Heart left ventricle (tissue), 16 donors: ENCODE measurements at regions of chr2 and their contacts with region 1.

Region 1: GRCh38 chr2:172102391-172103278 is at the start of gene DLX2:
- DNase-seq: peak; percentile 68 to 88 (median 80)
- ATAC-seq: peak; percentile 32 to 78 (median 69)
- H3K4me3 ChIP-seq: peak within 1 kb of the TSS; percentile 15 to 66 (median 51)
- H3K27ac ChIP-seq: no peak within 1 kb of the TSS
- H3K4me1 ChIP-seq: peaks cover 2 to 77% (median 51%) of the 10 kb centered on the region in 12 donors
- H3K27me3 ChIP-seq: peaks cover 83 to 100% (median 100%) of the 10 kb centered on the region in 9 donors
- CTCF ChIP-seq: no peak
- POLR2A ChIP-seq: no peak
- total RNA-seq, gene DLX2: not detected

Region 2: DNA sequence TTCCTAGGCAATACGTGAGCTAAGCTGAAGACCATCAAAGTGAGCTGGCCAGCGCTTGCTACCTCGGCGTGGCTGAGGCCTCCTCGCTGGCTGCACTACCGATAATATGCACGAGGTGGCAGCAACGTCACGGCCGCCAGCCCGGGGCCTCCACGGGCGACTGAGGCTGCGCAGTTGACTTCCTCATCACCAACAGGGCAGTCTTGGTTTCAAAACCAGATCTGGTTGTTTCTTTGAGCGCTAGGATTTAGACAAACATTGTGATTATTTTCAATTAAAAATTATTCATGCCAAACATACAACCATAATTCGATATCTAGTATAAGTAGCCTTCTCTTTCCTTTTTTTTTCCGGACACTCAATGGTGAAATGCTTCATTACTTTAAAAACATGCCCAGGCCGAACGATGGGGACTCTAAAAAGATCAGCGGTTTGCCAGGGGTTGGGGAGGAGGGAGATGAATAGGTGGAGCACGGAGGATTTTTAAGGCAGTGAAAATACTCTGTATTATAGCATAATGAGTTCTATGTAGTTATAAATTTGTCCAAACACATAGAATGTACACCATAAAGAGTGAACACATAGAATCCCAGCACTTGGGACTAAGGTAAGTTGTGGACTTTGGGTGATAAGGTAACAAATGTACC is 528.4 kb before region 1 on chr2:
- intact Hi-C with region 1: loop called in 3 of 10 experiments (anchors 10 kb)
- DNase-seq: peak; percentile 73 to 91 (median 80)
- ATAC-seq: peak; percentile 66 to 97 (median 96)
- H3K4me3 ChIP-seq: peak overlapping the region in 2 of 12 donors; percentile 1 to 5
- H3K27ac ChIP-seq: no peak overlapping the region
- H3K4me1 ChIP-seq: no peaks in the 10 kb centered on the region
- H3K27me3 ChIP-seq: peaks cover 0 to 5% (median 0%) of the 10 kb centered on the region in 9 donors
- CTCF ChIP-seq: peak; percentile 95 to 99 (median 98)
- POLR2A ChIP-seq: no peak

Region 3: GRCh38 chr2:171598713-171599319 is 503.8 kb before region 1 on chr2:
- intact Hi-C with region 1: loop called in 3 of 10 experiments (anchors 5 to 10 kb)
- DNase-seq: peak in 1 of 5 donors; percentile 22
- ATAC-seq: peak; percentile 54 to 84 (median 66)
- H3K4me3 ChIP-seq: no peak overlapping the region
- H3K27ac ChIP-seq: no peak overlapping the region
- H3K4me1 ChIP-seq: peaks cover 0 to 3% (median 0%) of the 10 kb centered on the region in 12 donors
- H3K27me3 ChIP-seq: peaks cover 0 to 24% (median 0%) of the 10 kb centered on the region in 9 donors
- CTCF ChIP-seq: peak; percentile 60 to 83 (median 72)
- POLR2A ChIP-seq: no peak

Region 4: DNA sequence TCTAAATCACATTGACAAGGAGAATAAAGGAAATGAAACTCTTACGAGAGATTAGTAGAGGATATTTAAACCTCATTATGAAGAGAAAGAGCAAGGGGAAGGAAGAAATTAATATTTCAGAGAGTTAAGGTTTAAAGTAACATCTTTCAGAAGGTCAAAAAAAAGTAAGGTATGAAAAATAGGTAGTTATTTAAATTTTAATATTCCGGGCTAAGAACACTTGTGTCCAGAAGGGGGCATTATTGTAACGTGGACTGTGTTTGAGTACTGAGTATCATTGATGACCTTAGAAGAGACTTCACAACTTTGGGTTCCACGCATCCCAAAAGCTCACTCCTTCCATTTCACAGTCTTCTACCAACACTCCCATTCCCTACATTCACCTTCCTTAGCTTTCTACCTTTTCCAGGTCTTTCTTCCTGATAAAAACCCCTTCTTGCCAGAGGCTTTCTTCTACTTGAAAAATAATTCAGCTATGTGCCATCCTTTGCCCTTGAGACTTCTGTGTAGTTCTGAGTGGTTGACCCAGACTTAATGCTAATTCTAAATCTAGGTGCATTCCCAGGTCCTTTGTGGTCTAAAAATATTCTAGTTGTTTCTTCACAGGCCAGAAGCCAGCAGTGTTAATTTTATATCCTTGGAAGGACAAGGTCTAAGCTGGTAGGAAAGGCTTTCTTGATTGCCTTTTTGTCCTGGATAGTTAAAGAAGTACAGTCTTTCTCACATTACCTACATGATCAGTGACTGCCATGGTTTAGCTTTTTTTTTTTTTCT is 398.9 kb before region 1 on chr2:
- intact Hi-C with region 1: loop called in 9 of 10 experiments (anchors 1 to 10 kb)
- DNase-seq: no peak
- ATAC-seq: peak; percentile 20 to 75 (median 52)
- H3K4me3 ChIP-seq: no peak overlapping the region
- H3K27ac ChIP-seq: peak overlapping the region in 10 of 12 donors; percentile 9 to 69 (median 43)
- H3K4me1 ChIP-seq: peaks cover 0 to 41% (median 16%) of the 10 kb centered on the region in 12 donors
- H3K27me3 ChIP-seq: no peaks in the 10 kb centered on the region
- CTCF ChIP-seq: peak; percentile 17 to 58 (median 38)
- POLR2A ChIP-seq: no peak

Region 5: GRCh38 chr2:171811245-171811628 is 291.4 kb before region 1 on chr2:
- intact Hi-C with region 1: loop called (anchors 2 to 10 kb)
- DNase-seq: no peak
- ATAC-seq: peak in 2 of 4 donors; percentile 22 to 28
- H3K4me3 ChIP-seq: no peak overlapping the region
- H3K27ac ChIP-seq: no peak overlapping the region
- H3K4me1 ChIP-seq: peaks cover 0 to 14% (median 0%) of the 10 kb centered on the region in 12 donors
- H3K27me3 ChIP-seq: no peaks in the 10 kb centered on the region
- CTCF ChIP-seq: peak in 9 of 12 donors; percentile 16 to 54 (median 41)
- POLR2A ChIP-seq: no peak

Region 6: GRCh38 chr2:171922230-171923022 is 180.2 kb before region 1 on chr2 and contains the start of gene HAT1:
- intact Hi-C with region 1: loop called in 1 of 10 experiments (anchors 10 kb)
- DNase-seq: peak; percentile 97 to 98 (median 98)
- ATAC-seq: peak; percentile 100
- H3K4me3 ChIP-seq: peak within 1 kb of the TSS; percentile 62 to 99 (median 84)
- H3K27ac ChIP-seq: peak within 1 kb of the TSS; percentile 72 to 97 (median 90)
- H3K4me1 ChIP-seq: peaks cover 6 to 33% (median 19%) of the 10 kb centered on the region in 12 donors
- H3K27me3 ChIP-seq: no peaks in the 10 kb centered on the region
- CTCF ChIP-seq: no peak
- POLR2A ChIP-seq: peak in 1 of 2 donors; percentile 76
- total RNA-seq, gene HAT1: 22.2 to 43.1 (median 34.1) TPM

Region 7: DNA sequence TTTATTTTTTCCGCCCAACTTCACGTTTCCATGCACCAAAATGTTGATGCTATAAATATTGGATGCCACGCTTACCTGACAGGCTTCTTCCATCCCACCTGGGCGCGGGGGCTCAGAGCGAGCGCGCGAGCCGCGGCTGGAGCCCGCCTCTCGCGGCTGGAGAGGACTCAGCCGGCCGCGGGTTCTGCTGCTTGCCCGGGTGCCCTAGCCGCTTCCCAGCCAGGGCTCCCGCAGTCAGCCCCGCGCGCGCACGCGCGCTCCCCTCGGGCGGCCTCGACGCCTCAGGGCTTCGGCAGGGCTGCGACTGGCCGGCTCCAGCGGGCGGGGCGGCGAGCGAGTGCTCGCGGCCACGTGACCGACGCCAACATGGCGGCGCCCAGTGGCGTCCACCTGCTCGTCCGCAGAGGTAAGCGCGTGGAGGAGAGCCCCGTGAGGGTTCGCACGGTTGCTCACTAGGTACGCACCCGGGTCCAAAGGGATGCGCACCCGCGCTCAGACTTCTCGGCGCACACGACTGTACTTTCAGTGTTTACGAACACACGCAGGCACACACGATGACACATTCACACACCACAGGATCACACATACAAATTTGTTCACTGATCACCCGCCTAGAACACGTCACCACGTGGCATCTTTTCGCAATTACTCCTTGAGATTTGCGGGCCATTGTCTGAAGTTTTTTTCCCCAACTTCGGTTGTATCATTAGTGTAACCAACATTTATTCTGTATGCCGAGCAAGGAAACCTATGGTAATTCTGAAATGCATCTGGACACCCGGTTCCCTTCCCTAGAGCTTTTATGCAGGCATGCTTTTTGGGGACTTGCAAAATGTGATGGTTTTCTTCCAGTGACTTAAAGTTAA is 102.8 kb before region 1 on chr2 and contains the start of gene METAP1D:
- intact Hi-C with region 1: loop called in 1 of 10 experiments (anchors 5 kb)
- DNase-seq: peak; percentile 86 to 95 (median 93)
- ATAC-seq: peak; percentile 94 to 100 (median 100)
- H3K4me3 ChIP-seq: peak within 1 kb of the TSS; percentile 37 to 99 (median 80)
- H3K27ac ChIP-seq: peak within 1 kb of the TSS in 3 of 12 donors; percentile 4 to 44 (median 38)
- H3K4me1 ChIP-seq: peaks cover 0 to 14% (median 5%) of the 10 kb centered on the region in 12 donors
- H3K27me3 ChIP-seq: no peaks in the 10 kb centered on the region
- CTCF ChIP-seq: no peak
- POLR2A ChIP-seq: peak in 1 of 2 donors; percentile 74
- total RNA-seq, gene METAP1D: 2.9 to 7.0 (median 6.2) TPM

Region 8: GRCh38 chr2:172046080-172046678 is 56.5 kb before region 1 on chr2:
- intact Hi-C with region 1: no loop called
- DNase-seq: no peak
- ATAC-seq: no peak
- H3K4me3 ChIP-seq: no peak overlapping the region
- H3K27ac ChIP-seq: no peak overlapping the region
- H3K4me1 ChIP-seq: no peaks in the 10 kb centered on the region
- H3K27me3 ChIP-seq: no peaks in the 10 kb centered on the region
- CTCF ChIP-seq: no peak
- POLR2A ChIP-seq: no peak